ENCODE measurements at regions of chr16 and their contacts with region 1.

Region 1: DNA sequence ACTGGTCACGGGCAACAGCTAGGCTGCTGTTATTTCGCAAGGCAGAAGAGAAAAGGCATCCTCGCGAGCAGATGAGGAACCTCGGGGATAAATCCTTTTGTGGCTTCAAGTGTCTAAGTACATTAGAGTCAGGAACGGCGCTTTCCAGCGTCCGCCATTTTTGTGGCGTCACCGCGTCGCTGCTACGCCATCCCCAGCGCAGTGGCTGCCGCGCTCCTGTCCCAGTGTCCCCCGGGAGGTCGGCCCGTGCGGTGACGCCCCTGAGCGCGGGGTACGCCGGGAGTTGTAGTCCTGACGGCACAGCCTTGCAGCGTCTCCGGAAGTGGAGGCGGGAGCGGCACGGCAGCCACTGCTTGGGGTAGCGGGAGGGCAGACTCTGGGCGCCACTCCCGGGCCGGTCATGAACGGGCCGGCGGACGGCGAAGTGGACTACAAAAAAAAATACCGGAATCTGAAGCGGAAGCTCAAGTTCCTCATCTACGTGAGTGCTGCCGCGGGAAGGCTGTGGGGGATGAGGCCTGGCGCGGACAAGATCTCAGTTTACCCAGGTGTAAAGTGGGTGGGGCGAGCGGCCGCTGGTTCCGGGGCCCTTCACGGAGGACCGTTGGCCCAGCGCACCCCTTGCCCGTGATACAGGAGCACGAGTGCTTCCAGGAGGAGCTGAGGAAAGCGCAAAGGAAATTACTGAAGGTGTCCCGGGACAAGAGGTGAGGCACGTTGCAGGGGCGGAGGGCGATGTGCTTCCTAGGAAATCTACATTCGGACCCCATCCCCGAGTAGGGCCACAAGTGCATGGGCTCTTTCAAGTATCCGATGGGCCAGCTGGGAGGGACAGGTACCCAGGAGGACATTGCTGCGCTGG is at the start of gene INO80E:
- DNase-seq: peak; percentile 91 to 100
- H3K4me3 ChIP-seq: peak within 1 kb of the TSS; percentile 72
- H3K27ac ChIP-seq: peak within 1 kb of the TSS; percentile 74
- H3K4me1 ChIP-seq: peaks cover 25% of the 10 kb centered on the region
- H3K27me3 ChIP-seq: no peaks in the 10 kb centered on the region
- CTCF ChIP-seq: no peak
- total RNA-seq, gene INO80E: 102 TPM in 2 replicates

Region 2: DNA sequence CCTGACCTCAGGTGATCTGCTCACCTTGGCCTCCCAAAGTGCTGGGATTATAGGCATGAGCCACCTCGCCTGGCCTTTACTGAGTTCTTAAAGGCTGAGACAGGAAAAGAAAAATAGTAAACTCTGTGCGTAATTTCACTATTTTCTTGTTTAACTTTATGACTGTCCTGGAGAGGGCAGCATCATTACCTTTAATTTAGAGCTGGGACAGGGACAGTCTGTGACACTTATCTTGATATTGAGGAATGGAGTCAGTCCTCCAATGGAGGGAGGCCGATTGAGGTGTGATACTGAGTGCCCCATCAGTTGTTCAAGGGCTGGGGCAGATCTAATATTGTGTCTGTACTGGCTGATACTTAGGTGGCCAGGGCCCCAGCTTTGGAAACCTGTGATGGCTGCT is 354.6 kb before region 1 on chr16:
- CTCF ChIA-PET with region 1: no interaction called
- POLR2A ChIA-PET with region 1: no interaction called
- intact Hi-C with region 1: no loop called
- DNase-seq: no peak
- H3K4me3 ChIP-seq: no peak overlapping the region
- H3K27ac ChIP-seq: no peak overlapping the region
- H3K4me1 ChIP-seq: no peaks in the 10 kb centered on the region
- H3K27me3 ChIP-seq: no peaks in the 10 kb centered on the region
- CTCF ChIP-seq: 0 out of 2 replicates have a peak, but pooled peaks have one; percentile 47

Region 3: DNA sequence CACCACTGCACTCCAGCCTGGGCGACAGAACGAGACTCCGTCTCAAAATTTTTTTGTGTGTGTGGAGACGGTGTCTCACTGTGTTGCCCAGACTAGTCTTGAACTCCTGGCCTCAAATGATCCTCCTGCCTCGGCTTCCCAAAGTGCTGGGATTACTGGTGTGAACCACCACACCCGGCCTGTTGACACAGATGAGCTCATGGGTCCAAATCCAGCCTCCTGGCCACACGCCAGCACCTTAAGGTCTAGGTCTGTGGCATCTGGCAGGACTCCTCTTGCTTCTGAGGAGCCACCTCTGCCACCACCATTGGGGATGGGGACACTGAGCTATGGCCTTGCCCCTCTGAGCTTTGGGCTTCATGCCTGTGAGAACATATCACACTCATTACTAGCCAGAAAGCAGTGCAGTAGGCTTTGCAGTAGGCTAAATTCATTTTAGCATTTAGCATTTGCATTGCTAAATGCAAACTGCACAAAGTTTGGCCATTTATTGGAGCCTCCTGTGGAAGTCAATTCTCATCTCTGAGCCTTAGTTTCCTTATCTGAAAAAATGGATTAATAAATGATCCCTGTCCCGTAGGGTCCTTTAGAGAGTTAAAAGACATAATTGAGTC is 127.6 kb before region 1 on chr16:
- CTCF ChIA-PET with region 1: no interaction called
- POLR2A ChIA-PET with region 1: interaction called, 17 read pairs
- intact Hi-C with region 1: loop called (anchors 2 kb)
- DNase-seq: no peak
- H3K4me3 ChIP-seq: no peak overlapping the region
- H3K27ac ChIP-seq: no peak overlapping the region
- H3K4me1 ChIP-seq: no peaks in the 10 kb centered on the region
- H3K27me3 ChIP-seq: no peaks in the 10 kb centered on the region
- CTCF ChIP-seq: no peak

Region 4: DNA sequence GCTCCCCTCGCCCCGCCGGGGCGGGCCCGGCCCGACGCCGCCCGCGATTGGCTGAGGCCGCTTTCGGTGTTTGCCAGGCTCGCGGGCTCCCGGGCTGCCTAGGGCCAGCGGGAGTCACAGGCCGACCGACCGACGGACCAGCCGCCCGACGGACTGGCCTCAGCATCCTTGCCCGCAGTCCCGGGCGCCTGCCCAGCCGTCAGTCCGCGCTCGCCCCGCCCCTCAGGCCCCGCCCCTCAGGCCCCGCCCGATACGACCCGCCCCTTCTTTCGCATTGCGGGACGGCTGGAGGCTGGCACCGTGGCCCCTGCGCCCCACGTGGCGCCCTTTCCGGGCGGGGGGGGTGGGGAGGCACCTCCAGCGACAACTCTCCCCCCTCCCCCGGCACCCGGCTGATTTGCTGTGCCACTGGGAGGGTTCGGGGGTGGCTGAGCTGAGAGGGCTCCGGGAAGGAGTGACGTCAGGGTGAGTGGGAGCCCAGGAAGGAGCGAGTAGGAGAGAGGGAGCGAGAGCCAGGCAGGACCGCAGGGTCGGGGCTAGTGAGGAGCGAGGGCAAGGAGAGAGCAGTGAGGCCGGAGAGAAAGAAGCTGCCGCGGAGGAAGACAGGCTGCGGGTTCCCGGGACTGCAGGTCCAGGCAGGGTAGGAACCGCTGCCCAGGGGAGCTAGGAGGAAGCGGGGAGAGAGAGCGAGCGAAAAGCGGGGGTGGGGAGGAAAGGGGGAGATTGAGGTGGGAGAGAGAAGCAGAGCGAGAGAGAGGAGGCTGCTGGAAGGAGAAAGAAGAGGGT is 95.8 kb before region 1 on chr16 and contains the start of gene ASPHD1:
- CTCF ChIA-PET with region 1: no interaction called
- POLR2A ChIA-PET with region 1: no interaction called
- intact Hi-C with region 1: loop called (anchors 1 kb)
- DNase-seq: peak; percentile 62 to 86
- H3K4me3 ChIP-seq: peak within 1 kb of the TSS; percentile 72
- H3K27ac ChIP-seq: peak within 1 kb of the TSS; percentile 51
- H3K4me1 ChIP-seq: peaks cover 16% of the 10 kb centered on the region; the same call in 1 of the 2 replicates
- H3K27me3 ChIP-seq: no peaks in the 10 kb centered on the region
- CTCF ChIP-seq: no peak
- total RNA-seq, gene ASPHD1: 8.3 and 11.3 TPM in 2 replicates

Region 5: GRCh38 chr16:29943846-29944669 is 52.1 kb before region 1 on chr16:
- CTCF ChIA-PET with region 1: no interaction called
- POLR2A ChIA-PET with region 1: no interaction called
- intact Hi-C with region 1: no loop called
- DNase-seq: peak; percentile 92 to 99
- H3K4me3 ChIP-seq: peak overlapping the region; percentile 47; the same call in 1 of the 2 replicates
- H3K27ac ChIP-seq: peak overlapping the region; percentile 94
- H3K4me1 ChIP-seq: peaks cover 26% of the 10 kb centered on the region
- H3K27me3 ChIP-seq: no peaks in the 10 kb centered on the region
- CTCF ChIP-seq: peak; percentile 69